Uterus (tissue), 4 donors: ENCODE measurements at regions of chr11 and their contacts with region 1.

Region 1: GRCh38 chr11:125164422-125165110 is at the start of gene PKNOX2:
- DNase-seq: peak; percentile 77 to 81
- H3K4me3 ChIP-seq: peak within 1 kb of the TSS; percentile 55 to 83
- H3K27ac ChIP-seq: peak within 1 kb of the TSS; percentile 79 to 91
- H3K4me1 ChIP-seq: no peaks in the 10 kb centered on the region
- H3K27me3 ChIP-seq: no peaks in the 10 kb centered on the region
- CTCF ChIP-seq: peak; percentile 54 to 89 (median 72)
- POLR2A ChIP-seq: peak; percentile 10 to 58
- total RNA-seq, gene PKNOX2: 0.29 to 22.7 (median 3.3) TPM

Region 2: GRCh38 chr11:125345421-125346178 is 181.0 kb after region 1 on chr11:
- intact Hi-C with region 1: loop called (anchors 5 kb)
- DNase-seq: peak; percentile 88 to 92
- H3K4me3 ChIP-seq: no peak overlapping the region
- H3K27ac ChIP-seq: peak overlapping the region; percentile 64 to 67
- H3K4me1 ChIP-seq: peaks cover 7 to 12% of the 10 kb centered on the region in 2 donors
- H3K27me3 ChIP-seq: no peaks in the 10 kb centered on the region
- CTCF ChIP-seq: peak; percentile 78 to 88 (median 88)
- POLR2A ChIP-seq: no peak